ENCODE measurements at regions of chr3 and their contacts with region 1.

Region 1: DNA sequence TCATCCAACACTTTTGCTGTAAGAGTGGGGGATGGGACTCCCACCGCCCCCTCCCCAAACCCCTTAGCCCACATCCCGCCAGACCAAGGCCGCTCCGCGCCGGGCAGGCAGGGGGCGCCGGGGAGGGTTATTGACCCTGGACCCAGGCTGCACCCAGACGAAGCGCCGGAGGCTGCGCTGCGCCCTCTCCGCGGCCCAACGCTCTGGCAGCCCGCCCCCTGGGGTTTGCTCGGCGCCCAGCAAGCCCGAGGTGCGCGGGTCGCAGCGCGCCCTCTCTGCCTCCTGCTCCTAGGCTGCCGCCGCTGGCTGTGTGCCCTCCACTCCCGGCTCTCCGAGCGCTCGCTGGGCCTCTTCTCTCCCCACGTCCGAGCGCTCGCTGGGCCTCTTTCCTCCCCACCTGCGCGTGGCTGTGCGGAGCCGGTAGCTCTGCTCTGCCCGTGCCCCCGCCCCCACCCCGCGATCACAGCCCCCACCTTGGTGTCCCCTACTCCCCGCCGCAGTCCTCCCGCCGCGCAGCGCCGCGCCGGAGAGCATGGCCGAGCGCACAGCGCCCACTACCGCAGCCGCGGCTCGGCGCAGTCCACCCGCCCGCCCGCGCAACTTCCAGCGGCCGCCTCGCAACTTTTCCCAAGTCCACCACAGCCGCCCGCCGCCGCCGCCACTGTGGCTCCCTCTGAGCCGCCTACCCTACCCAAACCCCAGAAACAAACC is 1.2 kb downstream of the MECOM start:
- DNase-seq: peak; percentile 75 to 93
- H3K4me3 ChIP-seq: peak overlapping the region; percentile 72
- H3K27ac ChIP-seq: peak overlapping the region; percentile 51
- H3K4me1 ChIP-seq: peaks cover 21% of the 10 kb centered on the region
- H3K27me3 ChIP-seq: no peaks in the 10 kb centered on the region
- CTCF ChIP-seq: peak; percentile 83

Region 2: DNA sequence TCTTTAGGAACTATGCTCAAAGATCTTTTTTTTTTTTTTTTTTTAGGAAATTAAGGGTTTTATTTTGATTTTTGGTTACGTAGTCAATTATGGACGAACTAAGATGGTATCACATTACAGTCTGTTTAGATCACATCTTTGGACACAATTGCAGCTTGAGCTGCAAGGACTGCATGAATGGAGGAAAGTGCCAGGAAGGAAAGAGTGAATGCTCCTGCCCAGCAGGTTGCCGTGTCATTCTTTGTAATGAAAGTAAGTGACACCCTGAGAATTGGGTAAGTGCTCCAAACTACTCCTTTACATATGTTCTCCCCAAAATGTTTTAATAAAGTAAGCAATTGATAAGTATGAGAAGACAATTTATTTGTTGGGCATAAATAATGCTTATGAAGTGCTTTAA is 850.1 kb before region 1 on chr3:
- CTCF ChIA-PET with region 1: no interaction called
- POLR2A ChIA-PET with region 1: interaction called, 30 read pairs
- intact Hi-C with region 1: no loop called
- DNase-seq: peak in 1 of 2 experiments; percentile 31
- H3K4me3 ChIP-seq: no peak overlapping the region
- H3K27ac ChIP-seq: no peak overlapping the region
- H3K4me1 ChIP-seq: no peaks in the 10 kb centered on the region
- H3K27me3 ChIP-seq: no peaks in the 10 kb centered on the region
- CTCF ChIP-seq: no peak

Region 3: GRCh38 chr3:168878655-168879054 is 783.6 kb before region 1 on chr3:
- CTCF ChIA-PET with region 1: no interaction called
- POLR2A ChIA-PET with region 1: no interaction called
- intact Hi-C with region 1: loop called (anchors 2 kb)
- DNase-seq: peak in 1 of 2 experiments; percentile 65
- H3K4me3 ChIP-seq: no peak overlapping the region
- H3K27ac ChIP-seq: peak overlapping the region; percentile 61
- H3K4me1 ChIP-seq: peaks cover 34% of the 10 kb centered on the region
- H3K27me3 ChIP-seq: no peaks in the 10 kb centered on the region
- CTCF ChIP-seq: no peak

Region 4: DNA sequence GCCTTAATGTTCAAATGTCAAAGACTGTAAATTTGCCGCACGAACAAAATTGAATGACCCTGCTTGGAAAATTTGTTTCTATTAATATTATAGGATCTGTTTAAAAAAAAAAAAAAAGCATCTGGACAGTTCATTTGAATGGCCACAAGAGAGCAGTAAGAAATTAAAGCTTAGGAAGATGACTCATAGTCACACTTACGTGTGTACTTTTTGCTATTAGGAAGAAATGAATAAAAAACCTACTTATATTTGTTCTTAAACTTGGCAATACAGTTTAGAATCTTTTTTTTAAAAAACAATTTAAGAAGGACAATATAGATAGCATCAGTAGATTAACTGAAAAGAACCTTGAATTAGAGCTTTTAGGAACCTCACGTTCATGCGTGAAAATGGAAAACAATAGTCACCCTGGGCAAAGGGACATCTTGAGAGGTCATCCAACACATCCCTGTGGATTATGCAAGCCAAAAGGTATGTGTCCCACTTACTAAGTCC is 620.6 kb before region 1 on chr3:
- CTCF ChIA-PET with region 1: no interaction called
- POLR2A ChIA-PET with region 1: no interaction called
- intact Hi-C with region 1: loop called (anchors 2 kb)
- DNase-seq: peak in 1 of 2 experiments; percentile 66
- H3K4me3 ChIP-seq: no peak overlapping the region
- H3K27ac ChIP-seq: no peak overlapping the region
- H3K4me1 ChIP-seq: peaks cover 25% of the 10 kb centered on the region
- H3K27me3 ChIP-seq: no peaks in the 10 kb centered on the region
- CTCF ChIP-seq: peak; percentile 78

Region 5: DNA sequence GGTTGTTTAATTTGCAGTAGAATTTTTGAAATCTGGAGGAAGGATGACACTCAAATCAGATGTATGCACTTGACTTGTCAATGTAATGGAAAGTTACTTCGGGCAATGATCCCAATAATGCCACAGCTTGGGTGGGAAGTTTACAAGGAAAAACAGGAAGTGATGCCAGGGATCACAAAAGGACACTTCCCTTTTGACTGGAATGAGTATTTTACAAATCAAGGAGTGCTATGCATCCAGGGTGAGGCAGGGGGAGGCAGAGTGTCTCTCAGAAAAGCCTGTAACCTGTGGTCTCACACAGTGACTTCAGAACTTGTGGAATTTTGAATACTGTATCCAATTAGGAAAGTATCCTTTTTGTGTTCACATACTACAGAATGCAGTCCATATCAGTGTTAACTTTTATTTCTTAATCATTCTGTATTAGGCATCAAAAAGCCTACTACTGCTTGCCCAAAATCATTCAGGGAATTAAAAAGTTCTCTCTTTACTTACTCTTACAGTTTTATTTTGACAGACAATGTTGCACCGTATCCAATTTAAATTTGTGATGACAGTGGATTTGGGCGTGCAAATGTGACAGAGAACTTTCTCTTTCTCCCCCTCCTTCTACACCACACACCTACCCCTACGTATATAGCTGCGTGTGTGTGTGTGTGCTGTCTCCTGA is 443.8 kb before region 1 on chr3:
- CTCF ChIA-PET with region 1: no interaction called
- POLR2A ChIA-PET with region 1: no interaction called
- intact Hi-C with region 1: loop called (anchors 1 kb)
- DNase-seq: peak in 1 of 2 experiments; percentile 52
- H3K4me3 ChIP-seq: no peak overlapping the region
- H3K27ac ChIP-seq: no peak overlapping the region
- H3K4me1 ChIP-seq: no peaks in the 10 kb centered on the region
- H3K27me3 ChIP-seq: no peaks in the 10 kb centered on the region
- CTCF ChIP-seq: peak; percentile 71

Region 6: DNA sequence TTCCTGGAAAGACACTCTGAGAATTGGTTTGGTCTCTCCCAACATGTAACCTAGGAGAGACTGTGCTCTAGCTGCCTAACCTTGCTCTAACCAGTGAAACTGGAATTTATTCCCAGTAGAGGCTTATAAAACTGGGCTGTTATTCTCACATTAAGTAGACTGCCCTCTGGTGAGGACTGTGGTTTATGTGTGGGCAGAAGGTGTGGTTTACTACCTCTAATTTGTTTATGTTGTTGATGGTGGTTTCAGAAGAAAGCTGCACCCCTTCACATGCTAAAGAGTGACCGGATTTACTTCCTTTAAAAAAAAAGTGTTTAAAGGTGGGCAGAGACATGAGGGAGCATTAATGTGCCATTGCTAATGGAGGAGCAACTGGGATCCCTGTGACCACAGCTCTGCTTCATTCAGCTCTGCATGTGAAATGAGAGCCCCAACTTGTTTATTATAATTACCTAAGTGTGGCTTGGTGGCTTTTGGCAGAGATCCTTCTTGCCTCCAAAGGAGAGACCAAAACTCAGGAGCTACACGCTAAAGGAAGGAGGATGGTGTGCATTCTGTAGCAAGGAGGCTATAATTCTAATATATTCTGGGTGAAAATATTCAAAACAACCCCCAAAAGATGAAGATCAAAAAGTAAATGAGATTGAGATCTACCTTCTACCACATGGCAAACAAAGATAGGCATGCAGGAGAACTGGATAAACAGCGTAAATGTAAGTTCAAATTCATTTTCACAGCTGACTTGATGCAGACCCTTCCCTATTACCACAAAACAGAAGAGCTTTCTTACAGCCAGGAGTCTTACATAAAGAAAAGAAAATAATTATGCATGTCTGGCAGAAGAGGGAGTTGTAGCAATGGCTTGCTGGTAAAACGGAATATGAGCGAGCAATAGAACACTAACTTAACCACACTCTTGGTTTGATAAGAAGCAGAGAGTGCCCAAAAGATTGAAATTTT is 271.7 kb before region 1 on chr3:
- CTCF ChIA-PET with region 1: interaction called, 5 read pairs
- POLR2A ChIA-PET with region 1: no interaction called
- intact Hi-C with region 1: loop called (anchors 1 kb)
- DNase-seq: peak; percentile 35 to 85
- H3K4me3 ChIP-seq: peak overlapping the region; percentile 9; the same call in 1 of the 2 replicates
- H3K27ac ChIP-seq: peak overlapping the region; percentile 26
- H3K4me1 ChIP-seq: peaks cover 30% of the 10 kb centered on the region
- H3K27me3 ChIP-seq: no peaks in the 10 kb centered on the region
- CTCF ChIP-seq: peak; percentile 44

Measured in PC-9 (cell line).